ENCODE measurements at regions of chr17 and their contacts with region 1.

Region 1: DNA sequence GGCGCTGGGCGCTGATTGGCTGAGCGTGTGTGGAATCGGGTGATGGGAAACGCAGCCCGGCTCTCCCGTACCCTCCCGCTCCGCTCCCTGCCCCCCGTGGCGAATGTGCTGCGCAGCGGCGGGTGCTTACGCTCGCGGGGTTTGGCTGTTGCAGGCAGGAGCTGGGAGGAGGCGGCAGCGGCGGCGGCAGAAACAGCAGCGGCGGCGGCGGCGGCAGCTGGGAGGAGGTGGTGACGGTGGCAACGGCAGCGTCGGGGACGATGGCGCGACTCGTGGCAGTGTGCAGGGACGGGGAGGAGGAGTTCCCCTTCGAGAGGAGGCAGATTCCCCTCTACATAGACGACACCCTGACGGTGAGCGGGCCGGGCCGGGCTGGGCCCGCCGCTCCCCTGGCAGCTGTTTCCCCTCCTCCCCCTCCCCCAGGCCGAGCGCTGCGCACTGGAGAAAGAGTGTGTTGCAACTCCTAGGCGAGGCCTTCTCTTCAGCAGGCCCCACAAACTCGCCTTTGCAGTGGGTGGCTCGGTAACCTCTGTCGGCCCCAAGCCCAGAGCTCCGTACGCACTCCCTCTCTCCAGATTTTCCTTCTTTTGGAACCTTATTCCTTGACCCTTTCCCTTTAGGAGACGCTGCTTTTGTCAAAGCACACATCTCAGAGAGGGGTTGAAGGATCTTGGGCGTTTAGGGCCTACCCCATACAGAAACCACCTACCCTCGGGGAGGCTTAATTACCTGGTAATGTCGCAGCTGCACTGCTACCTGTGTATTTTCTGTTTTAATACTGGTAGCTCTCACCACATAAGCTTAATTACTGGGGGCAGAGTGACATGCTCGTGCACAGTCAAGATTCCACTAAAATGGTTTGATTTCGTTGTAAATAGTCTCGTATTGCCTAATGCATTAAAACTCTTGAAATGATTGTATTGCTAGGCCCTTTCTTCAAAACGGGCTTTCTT is 1.0 kb downstream of the GGNBP2 start:
- DNase-seq: peak; percentile 99
- H3K4me3 Mint-ChIP-seq: peak overlapping the region; percentile 98
- H3K27ac Mint-ChIP-seq: peak overlapping the region; percentile 94
- H3K4me1 Mint-ChIP-seq: peaks cover 34% of the 10 kb centered on the region
- H3K27me3 Mint-ChIP-seq: no peaks in the 10 kb centered on the region

Region 2: DNA sequence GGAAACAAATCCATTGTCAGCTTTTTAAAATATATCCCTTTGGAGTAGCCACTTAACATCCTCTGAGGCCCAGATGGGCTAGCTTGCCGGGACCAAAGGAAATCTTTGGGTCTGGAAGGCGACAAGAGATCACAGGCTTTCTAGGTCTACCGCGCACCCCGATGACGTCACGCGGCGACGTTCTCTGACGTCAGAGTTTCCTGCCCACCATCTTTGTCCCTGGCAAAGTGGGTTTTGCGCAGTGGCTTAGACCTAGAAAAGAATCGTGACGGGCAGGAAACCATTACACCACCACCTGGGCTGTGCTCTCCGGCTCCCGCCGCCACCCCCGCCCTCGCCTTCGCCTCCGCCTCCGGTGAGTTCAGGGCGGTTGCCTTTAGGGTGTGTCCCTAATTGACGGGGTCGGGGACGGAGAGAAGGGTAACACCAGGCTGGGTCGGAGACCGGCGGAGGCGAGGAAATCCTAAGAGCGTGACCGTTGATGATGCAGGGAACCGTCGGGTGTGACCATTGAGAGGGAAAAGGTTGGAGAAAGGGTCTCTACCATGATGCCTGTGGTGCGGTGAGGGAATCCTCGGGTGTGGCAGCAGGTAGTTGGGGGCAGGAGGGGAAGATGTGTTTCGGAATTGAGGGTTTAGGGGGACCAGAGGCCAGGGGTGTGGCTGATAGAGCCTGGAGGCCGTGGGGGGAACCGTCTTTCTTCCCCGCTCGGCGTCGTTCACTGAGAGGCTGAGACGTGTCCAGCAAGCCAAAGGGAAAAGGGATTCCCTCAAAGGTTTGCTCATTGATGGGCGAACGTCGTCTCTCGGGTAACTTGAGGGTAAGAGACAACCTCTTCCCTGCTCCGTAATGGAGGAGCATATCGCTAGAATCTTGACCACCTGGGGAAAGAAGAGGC is 958.4 kb before region 1 on chr17 and contains the start of gene AP2B1:
- intact Hi-C with region 1: loop called (anchors 10 kb)
- DNase-seq: peak; percentile 99
- H3K4me3 Mint-ChIP-seq: peak within 1 kb of the TSS; percentile 98
- H3K27ac Mint-ChIP-seq: peak within 1 kb of the TSS; percentile 98
- H3K4me1 Mint-ChIP-seq: peaks cover 24% of the 10 kb centered on the region
- H3K27me3 Mint-ChIP-seq: peaks cover 12% of the 10 kb centered on the region
- total RNA-seq, gene AP2B1: 164 and 172 TPM in 2 replicates

Region 3: GRCh38 chr17:36468903-36469635 is 76.7 kb before region 1 on chr17:
- intact Hi-C with region 1: no loop called
- DNase-seq: no peak
- H3K4me3 Mint-ChIP-seq: no peak overlapping the region
- H3K27ac Mint-ChIP-seq: no peak overlapping the region
- H3K4me1 Mint-ChIP-seq: no peaks in the 10 kb centered on the region
- H3K27me3 Mint-ChIP-seq: peaks cover 20% of the 10 kb centered on the region

Region 4: DNA sequence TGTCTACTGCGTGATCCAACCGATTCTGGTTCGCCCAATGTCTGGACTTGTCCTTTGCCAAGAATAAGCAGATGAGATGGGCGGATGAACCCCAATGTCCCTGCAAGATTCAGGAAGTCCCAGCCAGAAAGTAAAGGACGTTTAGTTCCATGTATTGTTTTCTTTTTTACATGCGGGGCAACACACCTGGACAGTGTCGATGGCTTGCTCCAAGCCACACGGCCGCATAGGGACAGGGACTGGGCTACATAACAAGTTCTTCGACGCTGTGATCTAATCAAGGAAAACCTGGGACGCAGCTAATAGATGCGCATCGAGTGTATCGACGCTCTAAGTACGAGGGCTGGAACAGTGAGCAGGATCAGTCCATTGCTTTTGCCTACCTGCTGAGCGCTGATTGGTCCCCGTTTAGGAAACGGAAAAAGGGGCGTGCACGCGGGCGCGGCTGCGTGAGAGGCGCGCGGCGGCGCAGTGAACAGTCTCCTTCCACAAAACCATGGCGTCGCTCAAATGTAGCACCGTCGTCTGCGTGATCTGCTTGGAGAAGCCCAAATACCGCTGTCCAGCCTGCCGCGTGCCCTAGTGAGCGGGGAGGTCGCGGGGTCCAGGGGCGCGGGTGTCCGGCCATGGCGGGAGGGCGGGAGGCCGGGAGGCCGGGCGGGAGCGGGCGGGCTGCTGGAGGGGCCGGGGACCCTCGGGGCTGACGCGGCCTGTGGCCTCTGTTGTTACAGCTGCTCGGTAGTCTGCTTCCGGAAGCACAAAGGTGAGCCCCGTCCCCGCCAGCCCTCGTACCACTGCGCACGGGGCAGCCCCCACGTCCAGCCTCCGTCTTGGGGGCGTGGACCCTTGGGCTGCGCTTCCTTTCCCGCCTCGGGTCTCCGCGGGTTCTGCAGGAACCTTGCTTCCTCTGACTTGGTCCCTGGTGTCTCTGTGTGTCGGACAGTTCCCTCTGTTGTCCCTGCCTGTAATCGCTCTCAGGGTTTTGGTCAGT is 59.2 kb before region 1 on chr17 and contains the start of gene ZNHIT3:
- intact Hi-C with region 1: loop called (anchors 2 kb)
- DNase-seq: peak; percentile 98
- H3K4me3 Mint-ChIP-seq: peak within 1 kb of the TSS; percentile 98
- H3K27ac Mint-ChIP-seq: peak within 1 kb of the TSS; percentile 99
- H3K4me1 Mint-ChIP-seq: peaks cover 38% of the 10 kb centered on the region
- H3K27me3 Mint-ChIP-seq: peaks cover 12% of the 10 kb centered on the region
- total RNA-seq, gene ZNHIT3: 47.3 and 48.5 TPM in 2 replicates

Region 5: GRCh38 chr17:36534840-36535668 is 10.7 kb before region 1 on chr17 and contains the starts of genes MYO19 and PIGW:
- intact Hi-C with region 1: loop called (anchors 1 kb)
- DNase-seq: peak; percentile 97
- H3K4me3 Mint-ChIP-seq: peak within 1 kb of the TSS; percentile 99
- H3K27ac Mint-ChIP-seq: peak within 1 kb of the TSS; percentile 99
- H3K4me1 Mint-ChIP-seq: peaks cover 33% of the 10 kb centered on the region
- H3K27me3 Mint-ChIP-seq: no peaks in the 10 kb centered on the region
- total RNA-seq, gene MYO19: 167 and 172 TPM in 2 replicates
- total RNA-seq, gene PIGW: 30.4 and 30.5 TPM in 2 replicates

Region 6: DNA sequence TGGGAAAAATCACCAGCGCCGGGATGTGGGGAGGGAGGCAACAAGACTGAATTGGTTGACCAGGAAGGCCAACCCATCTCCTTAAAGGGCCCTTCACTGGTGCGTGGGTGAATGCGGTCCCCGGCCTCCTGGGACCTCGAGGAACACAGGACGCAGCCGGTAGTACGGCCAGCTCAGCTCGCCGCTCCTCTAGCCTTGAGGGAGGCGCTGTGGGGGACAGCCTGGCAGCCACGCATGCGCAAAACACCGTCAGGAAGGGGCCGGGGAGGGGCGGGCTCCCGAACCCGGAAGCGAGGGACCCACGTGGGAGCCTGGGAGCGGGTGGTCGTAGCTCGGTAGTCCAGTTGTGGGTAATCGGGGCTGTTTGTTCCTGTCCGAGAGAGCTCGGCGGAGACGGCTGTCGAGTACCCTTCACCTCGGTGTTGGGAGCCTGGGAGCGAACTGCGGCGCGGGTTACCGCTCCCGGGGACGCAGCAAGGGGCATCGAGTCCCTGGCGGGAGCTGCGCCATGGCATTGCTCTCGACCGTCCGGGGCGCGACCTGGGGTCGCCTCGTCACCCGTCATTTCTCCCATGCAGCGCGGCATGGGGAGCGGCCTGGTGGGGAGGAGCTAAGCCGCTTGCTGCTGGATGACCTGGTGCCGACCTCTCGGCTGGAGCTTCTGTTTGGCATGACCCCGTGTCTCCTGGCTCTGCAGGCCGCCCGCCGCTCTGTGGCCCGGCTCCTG is 55.7 kb after region 1 on chr17 and contains the start of gene MRM1:
- intact Hi-C with region 1: loop called (anchors 1 kb)
- DNase-seq: peak; percentile 96
- H3K4me3 Mint-ChIP-seq: peak within 1 kb of the TSS; percentile 94
- H3K27ac Mint-ChIP-seq: peak within 1 kb of the TSS; percentile 90
- H3K4me1 Mint-ChIP-seq: peaks cover 33% of the 10 kb centered on the region
- H3K27me3 Mint-ChIP-seq: no peaks in the 10 kb centered on the region
- total RNA-seq, gene MRM1: 25.1 and 26.8 TPM in 2 replicates

Region 7: DNA sequence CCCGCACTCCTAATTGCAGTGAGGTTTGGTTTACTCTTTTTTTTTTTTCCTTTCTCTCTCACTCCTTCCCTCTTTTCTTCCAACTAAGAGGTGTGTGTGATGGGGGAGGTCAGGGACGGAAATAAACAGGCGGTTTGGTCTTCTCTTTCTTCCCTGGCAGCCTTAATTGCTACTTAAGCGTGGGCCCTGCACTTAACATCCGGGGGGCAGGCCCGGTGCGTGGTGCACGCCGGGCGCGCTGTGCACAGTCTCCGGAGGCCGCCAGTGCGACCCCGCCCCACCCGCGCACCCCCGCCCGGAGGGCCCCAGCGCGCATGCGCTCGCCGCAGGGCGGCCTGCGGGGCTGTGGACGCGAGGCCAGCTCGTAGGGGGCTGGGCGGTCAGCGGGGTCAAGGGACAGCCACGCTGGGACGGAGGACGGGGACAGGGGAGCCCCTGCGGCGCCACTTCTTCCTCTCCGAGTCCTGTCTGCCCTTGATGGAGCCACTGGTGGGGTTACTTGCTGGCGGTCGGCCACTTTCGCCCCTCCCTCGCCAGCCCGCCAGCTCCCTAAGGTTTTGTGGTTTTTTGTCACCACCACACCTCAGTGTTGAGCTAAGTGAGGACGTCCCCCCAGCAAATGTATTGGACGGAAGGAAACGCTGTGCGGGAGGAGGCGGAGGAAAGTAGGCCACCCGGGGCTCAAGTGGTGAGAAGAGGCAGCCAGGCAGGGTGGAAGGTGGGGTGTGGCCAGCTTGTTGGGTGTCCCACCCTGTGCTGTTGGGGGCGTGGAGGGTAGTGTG is 176.6 kb after region 1 on chr17:
- intact Hi-C with region 1: loop called (anchors 10 kb)
- DNase-seq: peak; percentile 96
- H3K4me3 Mint-ChIP-seq: peak overlapping the region; percentile 80
- H3K27ac Mint-ChIP-seq: peak overlapping the region; percentile 99
- H3K4me1 Mint-ChIP-seq: peaks cover 50% of the 10 kb centered on the region
- H3K27me3 Mint-ChIP-seq: no peaks in the 10 kb centered on the region

Region 8: GRCh38 chr17:36948717-36949460 is 403.1 kb after region 1 on chr17 and contains the start of gene AATF:
- intact Hi-C with region 1: loop called (anchors 10 kb)
- DNase-seq: peak; percentile 100
- H3K4me3 Mint-ChIP-seq: peak within 1 kb of the TSS; percentile 95
- H3K27ac Mint-ChIP-seq: peak within 1 kb of the TSS; percentile 98
- H3K4me1 Mint-ChIP-seq: peaks cover 46% of the 10 kb centered on the region
- H3K27me3 Mint-ChIP-seq: peaks cover 36% of the 10 kb centered on the region
- total RNA-seq, gene AATF: 116 and 118 TPM in 2 replicates

Measured in activated CD4-positive, alpha-beta T cell treated with anti-CD3 and anti-CD28 coated beads, Interleukin-2, amount 10 ng/mL, durations not matched to agents 24 days and 14 days (primary cell).